IMR-90 (cell line): ENCODE measurements at regions of chr1 and their contacts with region 1.

Region 1: DNA sequence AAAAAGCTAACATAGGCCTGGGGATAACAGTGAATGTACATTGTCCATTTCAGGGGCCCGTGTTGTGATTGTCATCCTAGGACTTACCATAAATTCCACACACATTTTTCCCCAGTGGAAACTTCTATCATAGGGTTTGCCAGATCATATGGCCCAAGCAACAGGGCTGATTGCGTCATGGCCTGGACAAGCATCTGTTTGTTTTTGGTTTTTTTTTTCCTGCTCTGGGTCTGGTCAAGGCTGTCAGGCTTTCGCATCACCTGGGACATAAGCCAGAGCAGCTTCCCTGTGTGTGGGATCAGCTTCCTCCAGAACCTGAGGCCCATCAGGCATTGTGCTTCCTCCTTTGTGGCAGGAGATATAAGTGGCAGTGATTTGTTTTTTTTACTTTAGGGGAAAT is 598.5 kb upstream of the USP24 start:
- DNase-seq: peak; percentile 82
- ATAC-seq: peak; percentile 57
- H3K4me3 ChIP-seq: no peak overlapping the region
- H3K27ac ChIP-seq: peak overlapping the region; percentile 8; the same call in 1 of the 2 replicates
- H3K4me1 ChIP-seq: peaks cover 12% of the 10 kb centered on the region
- H3K27me3 ChIP-seq: no peaks in the 10 kb centered on the region
- CTCF ChIP-seq: no peak
- POLR2A ChIP-seq: no peak
- RAD21 ChIP-seq: no peak

Region 2: GRCh38 chr1:55741516-55741915 is 72.1 kb before region 1 on chr1:
- CTCF ChIA-PET with region 1: interaction called, 4 read pairs
- POLR2A ChIA-PET with region 1: no interaction called
- dilution Hi-C with region 1: no loop called
- in situ Hi-C with region 1: no loop called
- intact Hi-C with region 1: loop called (anchors 5 kb)
- DNase-seq: peak; percentile 88
- ATAC-seq: peak; percentile 80
- H3K4me3 ChIP-seq: no peak overlapping the region
- H3K27ac ChIP-seq: peak overlapping the region; percentile 100; the same call in 1 of the 2 replicates
- H3K4me1 ChIP-seq: peaks cover 10% of the 10 kb centered on the region
- H3K27me3 ChIP-seq: no peaks in the 10 kb centered on the region
- CTCF ChIP-seq: no peak
- POLR2A ChIP-seq: no peak
- RAD21 ChIP-seq: no peak

Region 3: GRCh38 chr1:55877437-55878232 is 64.0 kb after region 1 on chr1:
- CTCF ChIA-PET with region 1: no interaction called
- POLR2A ChIA-PET with region 1: no interaction called
- dilution Hi-C with region 1: no loop called
- in situ Hi-C with region 1: no loop called
- intact Hi-C with region 1: no loop called
- DNase-seq: peak; percentile 28
- ATAC-seq: no peak; the same call in 1 of the 2 replicates
- H3K4me3 ChIP-seq: no peak overlapping the region
- H3K27ac ChIP-seq: 0 out of 2 replicates have a peak overlapping the region, but pooled peaks have one; percentile 37
- H3K4me1 ChIP-seq: peaks cover 3% of the 10 kb centered on the region
- H3K27me3 ChIP-seq: peaks cover 3% of the 10 kb centered on the region
- CTCF ChIP-seq: no peak
- POLR2A ChIP-seq: no peak
- RAD21 ChIP-seq: no peak